T-cell (primary cell): ENCODE measurements at regions of chr5 and their contacts with region 1.

Region 1: DNA sequence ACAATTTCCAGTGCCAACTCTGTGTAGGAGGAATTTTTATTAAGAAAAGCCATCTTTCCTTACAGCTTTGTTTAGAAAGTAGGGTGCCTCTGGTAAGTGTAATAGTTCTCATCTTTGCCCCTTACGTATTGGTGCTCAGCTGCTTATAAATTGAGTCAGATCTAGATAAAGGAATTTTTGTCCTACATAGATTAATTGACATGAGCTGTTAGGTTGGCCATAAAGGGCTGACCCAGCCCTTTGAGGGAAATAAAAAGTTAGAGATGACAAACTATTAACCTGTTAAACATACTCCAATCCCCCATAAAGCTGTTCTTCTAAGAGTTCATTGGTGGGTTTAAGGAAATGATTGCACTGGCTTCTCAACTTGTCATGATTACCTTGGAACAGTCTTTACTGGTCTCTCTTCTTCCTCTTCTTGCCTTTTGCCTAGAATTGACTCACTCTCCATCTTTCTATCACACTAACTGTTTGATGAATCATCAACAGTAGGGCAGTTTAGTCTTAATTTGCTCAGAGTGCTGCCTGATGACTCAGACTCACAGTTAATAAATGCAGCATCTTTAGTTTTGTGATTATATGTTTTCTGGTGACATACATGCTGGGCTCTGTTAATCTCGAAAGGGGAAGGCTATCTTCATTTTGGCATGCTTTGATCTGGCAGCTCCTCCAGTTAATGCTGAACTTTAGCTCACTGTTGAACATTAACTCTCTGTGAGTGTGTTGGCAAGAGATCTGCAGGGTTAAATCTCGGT is 51.7 kb downstream of the ARHGAP26 start:
- DNase-seq: no peak
- ATAC-seq: peak in 2 of 4 experiments; percentile 80 to 88
- H3K4me3 ChIP-seq: no peak overlapping the region
- H3K4me3 Mint-ChIP-seq: no peak overlapping the region
- H3K27ac ChIP-seq: no peak overlapping the region
- H3K27ac Mint-ChIP-seq: no peak overlapping the region
- H3K4me1 ChIP-seq: peaks cover 0 to 26% of the 10 kb centered on the region in 2 experiments
- H3K4me1 Mint-ChIP-seq: peaks cover 50 to 59% (median 51%) of the 10 kb centered on the region in 3 donors
- H3K27me3 ChIP-seq: no peaks in the 10 kb centered on the region
- H3K27me3 Mint-ChIP-seq: no peaks in the 10 kb centered on the region

Region 2: GRCh38 chr5:141976176-141976575 is 845.7 kb before region 1 on chr5:
- CTCF ChIA-PET with region 1: no interaction called
- POLR2A ChIA-PET with region 1: no interaction called
- DNase-seq: no peak
- ATAC-seq: no peak
- H3K4me3 ChIP-seq: no peak overlapping the region
- H3K4me3 Mint-ChIP-seq: no peak overlapping the region
- H3K27ac ChIP-seq: no peak overlapping the region
- H3K27ac Mint-ChIP-seq: no peak overlapping the region
- H3K4me1 ChIP-seq: peaks cover 0 to 2% of the 10 kb centered on the region in 2 experiments
- H3K4me1 Mint-ChIP-seq: peaks cover 18 to 34% (median 26%) of the 10 kb centered on the region in 3 donors
- H3K27me3 ChIP-seq: no peaks in the 10 kb centered on the region
- H3K27me3 Mint-ChIP-seq: no peaks in the 10 kb centered on the region

Region 3: GRCh38 chr5:142792865-142793232 is 29.1 kb before region 1 on chr5:
- CTCF ChIA-PET with region 1: interaction called, 3 to 13 read pairs
- POLR2A ChIA-PET with region 1: no interaction called
- DNase-seq: no peak
- ATAC-seq: no peak
- H3K4me3 ChIP-seq: no peak overlapping the region
- H3K4me3 Mint-ChIP-seq: no peak overlapping the region
- H3K27ac ChIP-seq: no peak overlapping the region
- H3K27ac Mint-ChIP-seq: peak overlapping the region in 1 of 2 donors; percentile 50
- H3K4me1 ChIP-seq: peaks cover 10 to 21% of the 10 kb centered on the region in 2 experiments
- H3K4me1 Mint-ChIP-seq: peaks cover 37 to 54% (median 43%) of the 10 kb centered on the region in 3 donors
- H3K27me3 ChIP-seq: no peaks in the 10 kb centered on the region
- H3K27me3 Mint-ChIP-seq: no peaks in the 10 kb centered on the region

Region 4: DNA sequence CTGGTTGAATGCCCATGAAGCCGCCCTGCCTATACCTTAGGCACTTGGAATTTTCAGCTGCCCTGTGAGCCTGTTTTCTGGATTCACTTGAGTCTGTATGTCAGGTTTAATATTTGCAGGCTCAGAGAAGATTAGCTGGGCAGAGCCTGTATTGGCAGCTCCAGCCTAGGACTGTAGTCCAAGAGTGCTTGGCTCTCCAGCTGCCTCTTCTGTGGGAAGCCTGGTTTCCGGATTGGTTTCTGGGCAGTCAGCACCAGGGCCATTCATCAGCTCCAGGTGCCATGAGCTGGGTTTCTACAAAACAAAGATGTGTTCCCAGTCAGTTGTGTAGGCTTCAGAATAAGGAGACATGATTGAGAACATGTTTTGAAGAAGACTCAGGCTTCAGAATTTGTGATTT is 38.4 kb after region 1 on chr5:
- CTCF ChIA-PET with region 1: no interaction called
- POLR2A ChIA-PET with region 1: no interaction called
- DNase-seq: no peak
- ATAC-seq: no peak
- H3K4me3 ChIP-seq: no peak overlapping the region
- H3K4me3 Mint-ChIP-seq: no peak overlapping the region
- H3K27ac ChIP-seq: no peak overlapping the region
- H3K27ac Mint-ChIP-seq: no peak overlapping the region
- H3K4me1 ChIP-seq: peaks cover 7 to 26% of the 10 kb centered on the region in 2 experiments
- H3K4me1 Mint-ChIP-seq: peaks cover 52 to 80% (median 59%) of the 10 kb centered on the region in 3 donors
- H3K27me3 ChIP-seq: no peaks in the 10 kb centered on the region
- H3K27me3 Mint-ChIP-seq: no peaks in the 10 kb centered on the region

Region 5: GRCh38 chr5:142900927-142901326 is 79.0 kb after region 1 on chr5:
- CTCF ChIA-PET with region 1: no interaction called
- POLR2A ChIA-PET with region 1: no interaction called
- DNase-seq: no peak
- ATAC-seq: no peak
- H3K4me3 ChIP-seq: no peak overlapping the region
- H3K4me3 Mint-ChIP-seq: no peak overlapping the region
- H3K27ac ChIP-seq: no peak overlapping the region
- H3K27ac Mint-ChIP-seq: no peak overlapping the region
- H3K4me1 ChIP-seq: no peaks in the 10 kb centered on the region
- H3K4me1 Mint-ChIP-seq: no peaks in the 10 kb centered on the region
- H3K27me3 ChIP-seq: no peaks in the 10 kb centered on the region
- H3K27me3 Mint-ChIP-seq: no peaks in the 10 kb centered on the region